Activated T-helper 1 cell treated with anti-CD3 and anti-CD28 coated beads, Interleukin-12 subunit alpha, Interleukin-12 subunit beta, Interleukin-2, Interleukin-4 antibody, amounts not matched to agents 30 ng/mL and 10 ng/mL and 1 ng/mL, durations not matched to agents 14 hours and 24 hours and 36 hours (primary cell): ENCODE measurements at regions of chr3 and their contacts with region 1.

Region 1: GRCh38 chr3:48656061-48656840 is 6.4 kb downstream of the CELSR3 start:
- DNase-seq: peak; percentile 80
- H3K4me3 Mint-ChIP-seq: peak overlapping the region; percentile 79
- H3K27ac Mint-ChIP-seq: peak overlapping the region; percentile 89
- H3K4me1 Mint-ChIP-seq: peaks cover 7% of the 10 kb centered on the region
- H3K27me3 Mint-ChIP-seq: peaks cover 4% of the 10 kb centered on the region

Region 2: DNA sequence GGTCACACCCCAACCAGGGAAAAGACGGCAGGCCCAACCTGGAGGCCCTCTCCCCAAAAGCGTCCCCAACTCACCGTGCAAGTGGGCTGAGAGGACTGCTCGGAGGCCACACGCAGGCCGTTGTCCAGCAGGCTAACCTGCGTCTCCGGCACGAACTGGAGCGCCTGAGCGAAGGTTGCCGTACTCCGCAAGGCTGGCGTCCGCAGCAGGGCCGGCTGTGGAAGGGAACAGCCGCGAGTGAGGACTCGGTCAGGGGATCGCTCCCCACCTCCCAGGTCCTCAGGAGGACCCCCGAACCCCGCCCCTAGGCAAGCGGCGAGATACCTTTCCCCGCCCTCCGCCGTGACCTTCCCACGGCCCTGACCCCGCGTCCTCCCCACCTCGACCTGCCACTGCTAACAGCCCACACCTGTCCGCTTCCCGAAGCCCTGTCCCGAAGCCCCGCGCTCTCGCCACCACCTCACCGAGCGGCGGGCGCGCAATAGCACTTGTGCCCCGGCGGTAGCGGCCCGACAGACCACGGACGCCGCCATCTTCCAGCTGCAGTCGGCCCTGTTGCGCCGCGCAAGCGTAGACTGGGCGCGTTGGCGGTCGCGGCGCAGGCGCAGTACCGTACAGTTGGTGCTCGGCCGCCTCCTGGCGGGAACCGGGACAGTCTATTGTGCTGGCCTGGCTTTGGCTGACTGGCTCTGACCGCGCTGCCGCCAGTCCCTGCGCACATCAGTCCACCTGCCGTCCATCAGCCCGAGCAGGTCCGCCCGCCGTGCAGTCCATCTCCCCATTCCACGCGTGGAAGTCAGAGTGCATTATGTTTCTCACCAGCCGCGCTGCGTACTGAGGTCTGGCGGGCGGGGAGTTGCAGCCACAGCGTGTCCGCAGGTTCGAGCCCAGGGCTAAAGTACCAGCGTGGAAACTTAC is 46.9 kb before region 1 on chr3 and contains the start of gene UQCRC1:
- intact Hi-C with region 1: loop called (anchors 1 kb)
- DNase-seq: peak; percentile 92
- H3K4me3 Mint-ChIP-seq: peak within 1 kb of the TSS; percentile 100
- H3K27ac Mint-ChIP-seq: peak within 1 kb of the TSS; percentile 97
- H3K4me1 Mint-ChIP-seq: peaks cover 22% of the 10 kb centered on the region
- H3K27me3 Mint-ChIP-seq: peaks cover 2% of the 10 kb centered on the region
- total RNA-seq, gene UQCRC1: 191 and 193 TPM in 2 replicates

Region 3: GRCh38 chr3:48685602-48686511 is 29.6 kb after region 1 on chr3 and contains the start of gene NCKIPSD:
- intact Hi-C with region 1: loop called (anchors 1 kb)
- DNase-seq: peak; percentile 85
- H3K4me3 Mint-ChIP-seq: peak within 1 kb of the TSS; percentile 97
- H3K27ac Mint-ChIP-seq: peak within 1 kb of the TSS; percentile 95
- H3K4me1 Mint-ChIP-seq: peaks cover 38% of the 10 kb centered on the region
- H3K27me3 Mint-ChIP-seq: no peaks in the 10 kb centered on the region
- total RNA-seq, gene NCKIPSD: 40.8 and 45.5 TPM in 2 replicates

Region 4: DNA sequence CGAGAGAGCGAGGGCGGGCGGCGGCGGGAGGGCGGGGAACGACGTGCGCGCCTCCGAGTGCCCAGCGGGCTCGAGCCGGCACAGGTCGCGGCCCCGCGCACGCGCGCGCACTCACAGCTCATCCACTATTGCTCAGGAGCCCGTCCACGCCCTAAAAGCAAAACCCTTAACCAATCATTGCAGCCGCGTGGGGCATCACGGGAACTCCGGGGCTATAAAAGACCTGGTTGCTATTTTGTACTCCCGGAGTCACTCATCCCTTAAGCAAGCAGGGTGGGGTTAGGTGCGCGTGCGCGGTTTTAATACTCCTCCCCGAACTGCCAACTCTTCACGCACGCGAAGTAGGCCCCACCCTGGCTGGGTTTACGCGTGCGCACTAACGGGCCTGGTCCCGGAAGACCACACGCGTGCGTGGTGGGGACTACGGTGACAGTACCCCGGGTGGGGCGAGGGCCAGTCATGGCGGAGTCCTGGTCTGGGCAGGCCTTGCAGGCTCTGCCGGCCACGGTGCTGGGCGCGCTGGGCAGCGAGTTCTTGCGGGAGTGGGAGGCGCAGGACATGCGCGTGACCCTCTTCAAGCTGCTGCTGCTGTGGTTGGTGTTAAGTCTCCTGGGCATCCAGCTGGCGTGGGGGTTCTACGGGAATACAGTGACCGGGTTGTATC is 755.8 kb after region 1 on chr3 and contains the starts of genes RHOA and TCTA:
- intact Hi-C with region 1: no loop called
- DNase-seq: peak; percentile 99
- H3K4me3 Mint-ChIP-seq: peak within 1 kb of the TSS; percentile 98
- H3K27ac Mint-ChIP-seq: peak within 1 kb of the TSS; percentile 96
- H3K4me1 Mint-ChIP-seq: peaks cover 71% of the 10 kb centered on the region
- H3K27me3 Mint-ChIP-seq: no peaks in the 10 kb centered on the region
- total RNA-seq, gene RHOA: 376 and 381 TPM in 2 replicates
- total RNA-seq, gene TCTA: 27.8 and 30.0 TPM in 2 replicates